Vagina (tissue), 2 donors: ENCODE measurements at regions of chr2 and their contacts with region 1.

Region 1: DNA sequence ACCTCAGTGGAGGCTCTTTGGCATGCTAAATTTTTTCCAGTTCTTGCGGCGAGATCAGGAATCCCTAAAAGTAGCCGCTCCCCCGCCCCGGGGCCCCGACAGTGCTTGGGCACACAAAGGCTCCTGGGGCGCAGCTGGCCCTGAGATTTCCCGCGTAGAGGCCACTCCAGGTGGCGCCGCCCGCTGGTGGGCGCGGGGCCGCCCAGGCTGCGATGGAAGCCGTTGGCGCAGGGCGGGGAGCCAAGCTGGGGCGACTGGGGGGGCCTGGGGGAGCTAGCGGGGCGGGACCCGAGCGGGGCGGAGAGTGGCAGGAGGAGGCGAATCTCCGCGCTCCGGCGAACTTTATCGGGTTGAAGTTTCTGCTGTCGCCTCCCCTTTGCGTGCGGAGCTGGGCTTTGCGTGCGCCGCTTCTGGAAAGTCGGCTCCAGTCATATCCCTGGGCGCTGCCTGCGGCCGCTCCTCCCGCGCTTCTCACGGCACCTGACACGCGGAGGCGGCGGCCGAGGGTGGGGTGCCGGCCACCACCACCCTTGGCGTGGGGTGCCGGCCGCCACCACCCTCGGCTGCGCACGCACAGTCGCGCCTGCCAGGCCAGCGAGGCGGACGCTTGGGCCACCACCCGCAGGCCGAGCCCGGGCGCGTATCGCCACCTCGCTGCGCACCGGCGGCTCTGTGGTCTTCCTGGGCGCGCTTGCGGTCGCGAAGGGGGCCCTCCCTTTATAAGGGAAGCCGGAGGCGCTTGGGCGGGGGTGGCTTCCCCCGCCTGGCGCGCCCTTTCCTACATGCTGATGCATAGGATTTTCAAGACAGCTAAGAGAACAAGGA is 867 bp upstream of the CYP1B1 start:
- DNase-seq: no peak
- H3K4me3 ChIP-seq: peak overlapping the region; percentile 51 to 63
- H3K27ac ChIP-seq: peak overlapping the region; percentile 84
- H3K4me1 ChIP-seq: peaks cover 44% of the 10 kb centered on the region
- H3K27me3 ChIP-seq: no peaks in the 10 kb centered on the region
- CTCF ChIP-seq: no peak
- POLR2A ChIP-seq: no peak

Region 2: GRCh38 chr2:37982147-37982582 is 94.7 kb before region 1 on chr2:
- intact Hi-C with region 1: loop called (anchors 10 kb)
- DNase-seq: no peak
- H3K4me3 ChIP-seq: no peak overlapping the region
- H3K27ac ChIP-seq: no peak overlapping the region
- H3K4me1 ChIP-seq: no peaks in the 10 kb centered on the region
- H3K27me3 ChIP-seq: no peaks in the 10 kb centered on the region
- CTCF ChIP-seq: peak; percentile 75 to 83 (median 78)
- POLR2A ChIP-seq: no peak

Region 3: GRCh38 chr2:38164881-38165280 is 88.1 kb after region 1 on chr2:
- intact Hi-C with region 1: loop called (anchors 1 kb)
- DNase-seq: no peak
- H3K4me3 ChIP-seq: no peak overlapping the region
- H3K27ac ChIP-seq: no peak overlapping the region
- H3K4me1 ChIP-seq: peaks cover 22% of the 10 kb centered on the region
- H3K27me3 ChIP-seq: no peaks in the 10 kb centered on the region
- CTCF ChIP-seq: no peak
- POLR2A ChIP-seq: no peak

Region 4: DNA sequence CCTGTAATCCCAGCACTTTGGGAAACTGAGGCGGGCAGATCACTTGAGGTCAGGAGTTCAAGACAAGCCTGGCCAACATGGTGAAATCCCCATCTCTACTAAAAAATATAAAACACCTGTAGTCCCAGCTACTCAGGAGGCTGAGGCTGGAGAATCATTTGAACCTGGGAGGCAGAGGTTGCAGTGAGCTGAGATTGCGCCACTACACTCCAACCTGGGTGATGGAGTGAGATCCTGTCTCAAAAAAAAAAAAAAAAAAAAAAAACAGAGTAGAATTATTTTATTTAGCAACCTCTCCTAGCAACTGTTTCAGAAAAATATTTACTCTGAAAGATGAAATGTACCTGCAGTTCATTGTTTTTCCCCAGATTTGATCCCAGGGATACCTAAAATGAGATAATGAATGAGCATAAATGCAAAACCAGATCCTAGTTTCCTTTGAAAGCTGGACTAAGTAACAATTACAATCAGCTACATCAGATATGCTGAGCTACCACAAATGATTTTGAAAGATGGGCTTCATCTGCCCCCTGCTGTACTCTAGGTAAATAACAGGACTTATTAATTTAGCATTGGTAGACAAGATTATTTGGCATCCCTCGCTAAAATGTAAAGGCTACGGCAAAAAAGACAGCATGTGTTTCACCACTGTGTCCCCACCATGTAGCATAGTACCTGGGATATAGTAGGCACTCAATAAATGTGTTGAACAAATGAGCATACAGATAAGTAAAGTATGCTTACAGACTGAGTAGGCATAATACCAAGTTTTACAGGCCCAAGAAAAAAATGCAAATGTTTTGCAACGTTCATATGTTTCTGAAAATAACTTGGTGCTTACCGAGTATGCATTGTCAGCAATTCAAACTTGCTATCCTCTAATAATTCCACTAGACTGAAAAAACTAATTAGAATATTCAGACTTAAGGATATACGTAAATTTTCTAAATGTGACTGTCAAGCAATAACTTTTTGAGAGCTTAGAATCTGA is 197.8 kb after region 1 on chr2:
- intact Hi-C with region 1: loop called (anchors 2 kb)
- DNase-seq: no peak
- H3K4me3 ChIP-seq: no peak overlapping the region
- H3K27ac ChIP-seq: no peak overlapping the region
- H3K4me1 ChIP-seq: no peaks in the 10 kb centered on the region
- H3K27me3 ChIP-seq: no peaks in the 10 kb centered on the region
- CTCF ChIP-seq: peak; percentile 83 to 89 (median 87)
- POLR2A ChIP-seq: no peak